Panc1 (cell line): ENCODE measurements at regions of chr15 and their contacts with region 1.

Region 1: DNA sequence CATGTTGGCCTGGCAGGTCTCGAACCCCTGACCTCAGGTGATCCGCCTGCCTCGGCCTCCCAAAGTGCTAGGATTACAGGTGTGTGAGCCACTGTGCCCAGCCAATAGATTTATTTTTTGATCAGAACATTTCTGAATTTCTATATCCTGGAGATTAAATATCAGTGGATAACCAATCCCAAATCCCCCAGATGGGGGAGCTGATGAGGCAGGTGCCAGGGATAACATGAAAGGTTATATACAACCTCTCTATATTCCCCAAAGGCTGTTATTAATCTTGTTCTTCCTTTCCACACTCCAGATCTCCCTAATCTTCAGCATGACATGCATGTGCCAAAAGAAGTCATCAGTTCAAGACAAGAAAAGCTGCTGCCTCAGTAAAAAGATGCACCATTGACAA is 112.3 kb downstream of the WDR76 start:
- DNase-seq: no peak
- ATAC-seq: no peak
- H3K4me3 ChIP-seq: no peak overlapping the region
- H3K27ac ChIP-seq: no peak overlapping the region
- H3K4me1 ChIP-seq: no peaks in the 10 kb centered on the region
- H3K27me3 ChIP-seq: no peaks in the 10 kb centered on the region
- CTCF ChIP-seq: peak; percentile 75

Region 2: DNA sequence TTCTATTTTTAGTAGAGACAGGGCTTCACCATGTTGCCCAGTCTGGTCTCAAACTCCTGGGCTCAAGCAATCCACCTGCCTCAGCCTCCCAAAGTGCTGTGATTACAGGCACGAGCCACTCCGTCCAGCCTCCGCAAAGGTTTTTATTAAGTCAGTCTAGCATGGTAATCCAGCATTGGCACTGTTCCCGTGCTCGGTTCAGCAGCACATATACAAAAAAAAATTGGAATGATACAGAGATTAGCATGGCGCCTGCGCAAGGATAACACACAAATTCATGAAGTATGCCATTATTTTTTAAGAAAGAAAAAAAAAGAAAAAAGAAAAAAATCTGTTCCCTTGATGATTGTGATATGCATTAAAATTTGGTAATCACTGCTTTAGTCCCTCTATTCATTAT is 236.9 kb before region 1 on chr15:
- CTCF ChIA-PET with region 1: no interaction called
- POLR2A ChIA-PET with region 1: no interaction called
- in situ Hi-C with region 1: no loop called
- intact Hi-C with region 1: no loop called
- DNase-seq: no peak
- ATAC-seq: no peak
- H3K4me3 ChIP-seq: no peak overlapping the region
- H3K27ac ChIP-seq: no peak overlapping the region
- H3K4me1 ChIP-seq: no peaks in the 10 kb centered on the region
- H3K27me3 ChIP-seq: no peaks in the 10 kb centered on the region; the same call in 1 of the 2 replicates
- CTCF ChIP-seq: no peak

Region 3: GRCh38 chr15:43872416-43873020 is 66.6 kb before region 1 on chr15:
- CTCF ChIA-PET with region 1: no interaction called
- POLR2A ChIA-PET with region 1: no interaction called
- in situ Hi-C with region 1: no loop called
- intact Hi-C with region 1: loop called (anchors 10 kb)
- DNase-seq: peak; percentile 38
- ATAC-seq: peak; percentile 92
- H3K4me3 ChIP-seq: no peak overlapping the region
- H3K27ac ChIP-seq: no peak overlapping the region
- H3K4me1 ChIP-seq: no peaks in the 10 kb centered on the region
- H3K27me3 ChIP-seq: no peaks in the 10 kb centered on the region
- CTCF ChIP-seq: peak; percentile 81

Region 4: GRCh38 chr15:44066316-44066740 is 127.3 kb after region 1 on chr15:
- CTCF ChIA-PET with region 1: no interaction called
- POLR2A ChIA-PET with region 1: no interaction called
- in situ Hi-C with region 1: no loop called
- intact Hi-C with region 1: loop called (anchors 10 kb)
- DNase-seq: peak; percentile 58
- ATAC-seq: peak; percentile 85
- H3K4me3 ChIP-seq: peak overlapping the region in 1 of 2 experiments; percentile 30; a peak in 2 of 4 replicates
- H3K27ac ChIP-seq: peak overlapping the region; percentile 74
- H3K4me1 ChIP-seq: peaks cover 7% of the 10 kb centered on the region
- H3K27me3 ChIP-seq: no peaks in the 10 kb centered on the region
- CTCF ChIP-seq: peak; percentile 86